HepG2 (cell line): ENCODE measurements at regions of chr9 and their contacts with region 1.

Region 1: DNA sequence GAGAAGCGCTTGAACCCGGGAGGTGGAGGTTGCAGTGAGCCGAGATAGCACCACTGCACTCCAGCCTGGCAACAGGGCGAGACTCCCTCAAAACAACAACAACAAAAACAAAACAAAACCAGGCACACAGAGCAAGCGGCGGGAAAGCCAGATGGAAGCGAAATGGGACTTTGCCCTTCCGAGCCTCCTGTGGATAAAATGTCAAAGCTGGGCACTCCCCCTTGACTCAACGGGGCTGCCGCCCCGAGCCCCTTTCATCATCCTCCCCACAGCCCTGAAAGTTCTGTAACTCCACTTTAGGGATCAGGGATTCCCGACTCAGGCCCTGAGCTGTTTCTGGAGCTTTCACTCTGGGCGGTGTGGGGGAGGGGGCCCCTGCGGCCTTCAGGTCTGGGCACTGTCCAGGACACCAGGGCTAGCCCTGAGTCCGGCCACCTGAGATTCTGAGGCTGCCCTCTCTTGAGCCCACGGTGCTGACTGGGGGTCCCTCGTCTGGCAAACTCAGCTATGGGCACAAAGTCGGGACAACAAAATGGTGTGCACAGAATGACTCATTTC is 30.6 kb upstream of the OBP2B start:
- DNase-seq: no peak
- ATAC-seq: no peak
- H3K4me3 ChIP-seq: peak overlapping the region in 1 of 3 experiments; percentile 69; a peak in 1 of 6 replicates
- H3K27ac ChIP-seq: no peak overlapping the region
- H3K4me1 ChIP-seq: peaks cover 33% of the 10 kb centered on the region
- H3K27me3 ChIP-seq: peaks cover 2 to 8% of the 10 kb centered on the region in 2 experiments; a peak in 2 of 5 replicates
- CTCF ChIP-seq: no peak
- EP300 ChIP-seq: no peak
- POLR2A ChIP-seq: no peak
- RAD21 ChIP-seq: no peak

Region 2: DNA sequence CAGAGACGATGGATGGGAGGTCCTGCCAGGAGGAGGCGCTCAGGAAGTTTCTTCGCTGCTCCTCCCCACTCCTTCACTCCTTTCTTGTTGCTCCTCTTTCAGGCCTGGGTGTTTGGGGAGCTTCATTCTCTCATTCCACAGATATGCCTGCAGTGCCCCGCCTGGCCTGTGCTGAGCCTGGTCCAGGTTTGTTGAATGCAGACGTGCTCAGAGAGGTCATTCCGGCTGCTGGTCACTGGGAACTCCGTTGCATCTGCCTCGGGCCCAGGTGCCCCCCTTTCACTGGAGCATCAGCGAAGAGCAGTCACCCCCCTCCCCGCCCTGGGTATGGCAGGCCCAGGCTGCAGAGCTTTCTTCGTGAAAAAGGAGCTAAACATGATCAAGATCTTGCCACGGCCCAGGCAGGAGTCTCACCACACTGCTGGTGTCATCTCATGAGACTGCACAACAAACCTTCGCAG is 80.8 kb after region 1 on chr9:
- CTCF ChIA-PET with region 1: no interaction called
- POLR2A ChIA-PET with region 1: no interaction called
- in situ Hi-C with region 1: loop called (anchors 10 kb)
- intact Hi-C with region 1: no loop called
- DNase-seq: no peak
- ATAC-seq: peak; percentile 51
- H3K4me3 ChIP-seq: no peak overlapping the region
- H3K27ac ChIP-seq: no peak overlapping the region
- H3K4me1 ChIP-seq: no peaks in the 10 kb centered on the region
- H3K27me3 ChIP-seq: peaks cover 1 to 2% of the 10 kb centered on the region in 2 experiments; a peak in 1 of 5 replicates
- CTCF ChIP-seq: no peak
- EP300 ChIP-seq: no peak
- POLR2A ChIP-seq: no peak
- RAD21 ChIP-seq: no peak